Keratinocyte (primary cell): ENCODE measurements at regions of chr7 and their contacts with region 1.

Region 1: GRCh38 chr7:71733107-71733870 is 601.3 kb downstream of the GALNT17 start:
- DNase-seq: no peak
- H3K4me3 ChIP-seq: no peak overlapping the region
- H3K27ac ChIP-seq: no peak overlapping the region
- H3K4me1 ChIP-seq: no peaks in the 10 kb centered on the region
- H3K27me3 ChIP-seq: no peaks in the 10 kb centered on the region
- CTCF ChIP-seq: peak; percentile 68 to 90 (median 81)

Region 2: GRCh38 chr7:70856866-70857630 is 876.2 kb before region 1 on chr7:
- dilution Hi-C with region 1: loop called (anchors 25 kb)
- DNase-seq: peak; percentile 1
- H3K4me3 ChIP-seq: no peak overlapping the region
- H3K27ac ChIP-seq: no peak overlapping the region
- H3K4me1 ChIP-seq: no peaks in the 10 kb centered on the region
- H3K27me3 ChIP-seq: no peaks in the 10 kb centered on the region
- CTCF ChIP-seq: peak; percentile 70 to 77 (median 73)

Region 3: GRCh38 chr7:71682841-71683781 is 50.2 kb before region 1 on chr7:
- dilution Hi-C with region 1: no loop called
- DNase-seq: no peak
- H3K4me3 ChIP-seq: no peak overlapping the region
- H3K27ac ChIP-seq: no peak overlapping the region
- H3K4me1 ChIP-seq: no peaks in the 10 kb centered on the region
- H3K27me3 ChIP-seq: no peaks in the 10 kb centered on the region
- CTCF ChIP-seq: no peak